ENCODE measurements at regions of chr3 and their contacts with region 1.

Region 1: GRCh38 chr3:13405614-13406013 is 14.5 kb downstream of the NUP210 start:
- DNase-seq: no peak
- H3K4me3 ChIP-seq: no peak overlapping the region
- H3K4me3 Mint-ChIP-seq: peak overlapping the region in 1 of 8 donors; percentile 1
- H3K27ac ChIP-seq: no peak overlapping the region
- H3K27ac Mint-ChIP-seq: peak overlapping the region; percentile 8 to 86 (median 65)
- H3K4me1 ChIP-seq: peaks cover 36% of the 10 kb centered on the region
- H3K4me1 Mint-ChIP-seq: peaks cover 31 to 61% (median 45%) of the 10 kb centered on the region in 4 donors
- H3K27me3 ChIP-seq: no peaks in the 10 kb centered on the region
- H3K27me3 Mint-ChIP-seq: no peaks in the 10 kb centered on the region

Region 2: GRCh38 chr3:11643605-11644087 is 1762.0 kb before region 1 on chr3 and contains the start of gene VGLL4:
- CTCF ChIA-PET with region 1: no interaction called
- POLR2A ChIA-PET with region 1: no interaction called
- intact Hi-C with region 1: no loop called
- DNase-seq: peak; percentile 42 to 64 (median 44)
- H3K4me3 ChIP-seq: peak within 1 kb of the TSS; percentile 79 to 98
- H3K4me3 Mint-ChIP-seq: peak within 1 kb of the TSS; percentile 95 to 100 (median 98)
- H3K27ac ChIP-seq: peak within 1 kb of the TSS; percentile 72
- H3K27ac Mint-ChIP-seq: peak within 1 kb of the TSS; percentile 93 to 100 (median 98)
- H3K4me1 ChIP-seq: peaks cover 28% of the 10 kb centered on the region
- H3K4me1 Mint-ChIP-seq: peaks cover 19 to 54% (median 28%) of the 10 kb centered on the region in 4 donors
- H3K27me3 ChIP-seq: no peaks in the 10 kb centered on the region
- H3K27me3 Mint-ChIP-seq: no peaks in the 10 kb centered on the region
- total RNA-seq, gene VGLL4: 29.2 to 30.3 TPM

Region 3: GRCh38 chr3:11910971-11911531 is 1494.6 kb before region 1 on chr3:
- CTCF ChIA-PET with region 1: no interaction called
- POLR2A ChIA-PET with region 1: no interaction called
- intact Hi-C with region 1: no loop called
- DNase-seq: no peak
- H3K4me3 ChIP-seq: no peak overlapping the region
- H3K4me3 Mint-ChIP-seq: no peak overlapping the region
- H3K27ac ChIP-seq: no peak overlapping the region
- H3K27ac Mint-ChIP-seq: no peak overlapping the region
- H3K4me1 ChIP-seq: peaks cover 9% of the 10 kb centered on the region
- H3K4me1 Mint-ChIP-seq: peaks cover 7 to 25% (median 10%) of the 10 kb centered on the region in 4 donors
- H3K27me3 ChIP-seq: no peaks in the 10 kb centered on the region
- H3K27me3 Mint-ChIP-seq: peaks cover 0 to 2% of the 10 kb centered on the region in 2 donors

Region 4: DNA sequence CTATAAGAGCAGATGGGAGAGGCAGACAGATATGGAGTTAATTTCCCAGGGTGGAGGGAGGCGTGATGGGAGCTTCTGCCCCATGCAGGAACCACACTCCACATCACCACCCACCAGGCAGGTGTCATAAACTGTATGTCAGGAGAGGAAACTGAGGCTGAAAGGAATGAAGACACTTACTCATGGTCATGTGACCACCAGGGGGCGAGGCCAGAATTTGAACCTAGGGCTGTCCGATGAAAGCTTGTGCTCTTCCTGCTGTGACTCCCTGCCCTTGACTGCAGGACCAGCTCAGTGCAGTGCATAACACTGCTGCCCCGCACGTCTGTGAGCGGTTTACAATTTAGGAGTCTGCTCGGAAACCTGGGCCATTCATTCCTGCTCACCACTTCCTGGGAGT is 14.3 kb before region 1 on chr3:
- CTCF ChIA-PET with region 1: interaction called, 22 read pairs
- POLR2A ChIA-PET with region 1: no interaction called
- intact Hi-C with region 1: no loop called
- DNase-seq: peak in 4 of 5 donors; percentile 19 to 28 (median 22)
- H3K4me3 ChIP-seq: no peak overlapping the region
- H3K4me3 Mint-ChIP-seq: no peak overlapping the region
- H3K27ac ChIP-seq: no peak overlapping the region
- H3K27ac Mint-ChIP-seq: peak overlapping the region in 6 of 7 donors; percentile 30 to 92 (median 65)
- H3K4me1 ChIP-seq: peaks cover 3% of the 10 kb centered on the region
- H3K4me1 Mint-ChIP-seq: peaks cover 8 to 30% (median 15%) of the 10 kb centered on the region in 4 donors
- H3K27me3 ChIP-seq: no peaks in the 10 kb centered on the region
- H3K27me3 Mint-ChIP-seq: no peaks in the 10 kb centered on the region

Region 5: GRCh38 chr3:13518516-13518953 is 112.9 kb after region 1 on chr3:
- CTCF ChIA-PET with region 1: no interaction called
- POLR2A ChIA-PET with region 1: no interaction called
- intact Hi-C with region 1: no loop called
- DNase-seq: no peak
- H3K4me3 ChIP-seq: no peak overlapping the region
- H3K4me3 Mint-ChIP-seq: no peak overlapping the region
- H3K27ac ChIP-seq: no peak overlapping the region
- H3K27ac Mint-ChIP-seq: no peak overlapping the region
- H3K4me1 ChIP-seq: no peaks in the 10 kb centered on the region
- H3K4me1 Mint-ChIP-seq: no peaks in the 10 kb centered on the region
- H3K27me3 ChIP-seq: no peaks in the 10 kb centered on the region
- H3K27me3 Mint-ChIP-seq: peaks cover 0 to 6% of the 10 kb centered on the region in 2 donors

Region 6: GRCh38 chr3:14899993-14900618 is 1494.5 kb after region 1 on chr3:
- CTCF ChIA-PET with region 1: no interaction called
- POLR2A ChIA-PET with region 1: no interaction called
- intact Hi-C with region 1: no loop called
- DNase-seq: no peak
- H3K4me3 ChIP-seq: no peak overlapping the region
- H3K4me3 Mint-ChIP-seq: no peak overlapping the region
- H3K27ac ChIP-seq: no peak overlapping the region
- H3K27ac Mint-ChIP-seq: no peak overlapping the region
- H3K4me1 ChIP-seq: no peaks in the 10 kb centered on the region
- H3K4me1 Mint-ChIP-seq: peaks cover 0 to 3% (median 0%) of the 10 kb centered on the region in 4 donors
- H3K27me3 ChIP-seq: no peaks in the 10 kb centered on the region
- H3K27me3 Mint-ChIP-seq: peaks cover 8 to 16% of the 10 kb centered on the region in 2 donors

Measured in CD4-positive, alpha-beta memory T cell (primary cell).